ENCODE measurements at regions of chr5 and their contacts with region 1.

Region 1: GRCh38 chr5:159444441-159445082 is 114.3 kb upstream of the IL12B start:
- DNase-seq: no peak
- H3K4me3 Mint-ChIP-seq: no peak overlapping the region
- H3K27ac Mint-ChIP-seq: no peak overlapping the region
- H3K4me1 Mint-ChIP-seq: peaks cover 16% of the 10 kb centered on the region
- H3K27me3 Mint-ChIP-seq: peaks cover 45% of the 10 kb centered on the region

Region 2: GRCh38 chr5:159915904-159916840 is 471.6 kb after region 1 on chr5 and contains the start of gene ADRA1B:
- intact Hi-C with region 1: loop called (anchors 1 kb)
- DNase-seq: peak; percentile 9
- H3K4me3 Mint-ChIP-seq: peak within 1 kb of the TSS; percentile 66
- H3K27ac Mint-ChIP-seq: no peak within 1 kb of the TSS
- H3K4me1 Mint-ChIP-seq: peaks cover 11% of the 10 kb centered on the region
- H3K27me3 Mint-ChIP-seq: peaks cover 45% of the 10 kb centered on the region
- total RNA-seq, gene ADRA1B: not detected in 2 replicates

Region 3: GRCh38 chr5:159965031-159965837 is 520.7 kb after region 1 on chr5:
- intact Hi-C with region 1: loop called (anchors 5 kb)
- DNase-seq: no peak
- H3K4me3 Mint-ChIP-seq: no peak overlapping the region
- H3K27ac Mint-ChIP-seq: no peak overlapping the region
- H3K4me1 Mint-ChIP-seq: no peaks in the 10 kb centered on the region
- H3K27me3 Mint-ChIP-seq: peaks cover 29% of the 10 kb centered on the region

Region 4: DNA sequence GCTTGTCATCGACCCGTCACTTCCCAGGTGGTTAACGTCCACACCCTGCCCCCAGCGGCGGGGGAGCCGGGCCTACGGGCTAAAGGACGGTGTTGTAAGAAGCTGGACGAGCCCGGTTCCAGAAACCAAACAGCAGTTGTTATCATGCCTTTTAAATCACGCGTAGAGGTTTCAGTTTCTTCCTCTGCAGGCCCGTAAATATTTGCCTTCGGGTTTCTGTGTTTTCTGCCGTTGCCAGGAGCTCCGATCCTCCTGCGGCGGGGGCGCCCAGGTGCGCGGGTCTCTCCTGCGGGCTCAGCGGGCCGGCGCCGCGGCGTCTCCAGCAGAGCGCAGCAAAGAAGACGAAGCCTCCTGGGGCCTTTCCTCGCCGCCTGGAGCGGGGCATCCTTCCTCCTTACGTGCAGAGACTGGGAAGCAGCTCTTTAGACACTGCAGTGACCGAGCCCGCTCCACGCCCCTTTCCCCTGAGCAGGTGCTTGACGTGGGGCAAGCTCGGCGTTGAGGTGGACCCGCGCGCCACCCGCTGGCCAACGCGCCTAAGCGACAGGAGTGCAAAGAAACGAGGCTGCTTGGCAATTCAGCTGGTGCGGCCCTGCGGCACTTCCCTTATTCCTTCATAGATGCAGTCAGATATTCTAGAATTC is 542.6 kb after region 1 on chr5:
- intact Hi-C with region 1: loop called (anchors 1 kb)
- DNase-seq: peak; percentile 60
- H3K4me3 Mint-ChIP-seq: peak overlapping the region; percentile 53
- H3K27ac Mint-ChIP-seq: no peak overlapping the region
- H3K4me1 Mint-ChIP-seq: peaks cover 10% of the 10 kb centered on the region
- H3K27me3 Mint-ChIP-seq: peaks cover 68% of the 10 kb centered on the region

Region 5: GRCh38 chr5:160342403-160342941 is 897.9 kb after region 1 on chr5:
- intact Hi-C with region 1: loop called (anchors 1 kb)
- DNase-seq: no peak
- H3K4me3 Mint-ChIP-seq: no peak overlapping the region
- H3K27ac Mint-ChIP-seq: no peak overlapping the region
- H3K4me1 Mint-ChIP-seq: peaks cover 4% of the 10 kb centered on the region
- H3K27me3 Mint-ChIP-seq: peaks cover 9% of the 10 kb centered on the region